AG04449 (cell line): ENCODE measurements at regions of chr22 and their contacts with region 1.

Region 1: GRCh38 chr22:26364066-26365015 is 64.7 kb upstream of the ASPHD2 start:
- DNase-seq: no peak
- H3K4me3 ChIP-seq: no peak overlapping the region
- CTCF ChIP-seq: peak; percentile 71

Region 2: DNA sequence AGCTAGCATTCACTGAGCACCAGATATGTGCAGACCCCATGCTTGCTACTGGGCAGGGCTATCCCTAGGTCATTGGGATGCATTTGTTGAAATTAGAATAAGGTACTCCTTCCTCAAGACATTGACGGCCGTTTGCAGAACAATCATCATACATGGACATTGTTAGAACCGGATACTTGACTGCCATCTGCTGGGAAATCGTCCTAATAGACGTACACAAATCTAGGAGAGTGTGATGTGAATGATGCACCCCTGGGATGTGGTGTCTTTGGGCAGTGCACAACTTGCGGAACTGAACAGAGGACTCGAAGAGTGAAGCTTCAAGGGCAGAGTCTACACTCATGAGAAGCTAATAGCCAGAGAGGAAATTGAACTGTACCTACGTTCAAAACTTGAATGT is 586.5 kb before region 1 on chr22:
- CTCF ChIA-PET with region 1: interaction called, 17 read pairs
- POLR2A ChIA-PET with region 1: no interaction called
- DNase-seq: no peak
- H3K4me3 ChIP-seq: no peak overlapping the region
- CTCF ChIP-seq: peak; percentile 43

Region 3: DNA sequence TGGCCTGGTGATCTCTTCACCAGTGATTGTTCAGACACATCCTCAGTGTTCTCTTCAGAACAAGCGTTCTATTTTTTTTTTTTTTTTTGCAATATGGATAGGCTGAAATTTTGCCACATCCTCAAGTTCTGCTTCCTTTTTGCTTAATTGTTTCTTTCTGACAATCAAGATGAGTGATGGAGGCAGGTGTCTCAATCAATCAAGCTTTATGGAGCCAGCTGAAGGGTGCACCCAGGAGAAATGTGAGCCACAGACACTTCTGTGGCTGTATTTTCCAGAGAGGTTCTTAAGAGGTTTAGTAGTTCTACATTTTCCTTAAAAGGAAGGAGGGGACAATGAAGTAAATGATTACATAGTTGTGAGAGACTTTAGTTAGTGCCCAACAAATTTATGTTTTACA is 20.8 kb after region 1 on chr22:
- CTCF ChIA-PET with region 1: interaction called, 137 read pairs
- POLR2A ChIA-PET with region 1: no interaction called
- DNase-seq: no peak
- H3K4me3 ChIP-seq: no peak overlapping the region
- CTCF ChIP-seq: no peak

Region 4: DNA sequence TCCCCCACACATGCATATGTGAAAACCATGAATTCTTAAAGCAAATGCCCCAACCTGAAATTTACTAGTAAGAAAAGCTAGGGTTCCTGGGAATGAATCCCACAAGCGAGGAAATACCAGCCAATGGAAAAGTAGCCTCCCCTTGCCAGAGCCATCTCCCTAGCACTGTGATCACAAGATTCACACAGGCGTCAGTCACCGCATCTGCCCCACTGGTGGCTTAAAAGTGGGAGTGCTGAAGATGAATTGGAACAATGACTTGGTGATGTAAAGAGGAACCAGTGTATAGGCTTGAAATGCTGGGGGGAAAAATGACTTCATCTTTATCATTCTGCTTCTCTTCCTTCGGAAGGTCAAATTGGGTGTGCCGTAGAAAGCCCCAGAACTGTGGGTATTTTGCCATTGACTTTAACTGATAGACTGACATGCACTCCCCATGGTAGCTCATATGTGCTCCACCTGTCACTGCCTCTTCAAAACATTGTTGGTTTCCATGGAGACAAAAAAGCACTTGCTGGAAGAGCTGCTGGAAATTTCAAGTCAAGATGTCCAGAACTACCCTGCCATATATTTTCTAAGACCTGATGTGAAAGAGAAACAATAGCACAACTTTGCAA is 45.5 kb after region 1 on chr22:
- CTCF ChIA-PET with region 1: interaction called, 11 read pairs
- POLR2A ChIA-PET with region 1: no interaction called
- DNase-seq: no peak
- H3K4me3 ChIP-seq: no peak overlapping the region
- CTCF ChIP-seq: no peak

Region 5: GRCh38 chr22:26436903-26437515 is 72.7 kb after region 1 on chr22:
- CTCF ChIA-PET with region 1: interaction called, 26 read pairs
- POLR2A ChIA-PET with region 1: no interaction called
- DNase-seq: no peak
- H3K4me3 ChIP-seq: no peak overlapping the region
- CTCF ChIP-seq: no peak

Region 6: GRCh38 chr22:26483439-26484359 is 119.4 kb after region 1 on chr22 and contains the starts of genes HPS4 and SRRD:
- CTCF ChIA-PET with region 1: interaction called, 23 read pairs
- POLR2A ChIA-PET with region 1: no interaction called
- DNase-seq: peak; percentile 46
- H3K4me3 ChIP-seq: peak within 1 kb of the TSS; percentile 92
- CTCF ChIP-seq: no peak